ENCODE measurements at regions of chr1 and their contacts with region 1.

Region 1: GRCh38 chr1:147627435-147628110 is 42.8 kb downstream of the ACP6 start:
- DNase-seq: peak; percentile 26
- H3K4me3 ChIP-seq: no peak overlapping the region
- H3K27ac ChIP-seq: no peak overlapping the region
- H3K27me3 ChIP-seq: no peaks in the 10 kb centered on the region
- CTCF ChIP-seq: peak; percentile 96

Region 2: GRCh38 chr1:147605591-147605990 is 22.0 kb before region 1 on chr1:
- CTCF ChIA-PET with region 1: interaction called, 16 read pairs
- POLR2A ChIA-PET with region 1: no interaction called
- DNase-seq: no peak
- H3K4me3 ChIP-seq: no peak overlapping the region
- H3K27ac ChIP-seq: no peak overlapping the region
- H3K27me3 ChIP-seq: no peaks in the 10 kb centered on the region
- CTCF ChIP-seq: no peak

Region 3: DNA sequence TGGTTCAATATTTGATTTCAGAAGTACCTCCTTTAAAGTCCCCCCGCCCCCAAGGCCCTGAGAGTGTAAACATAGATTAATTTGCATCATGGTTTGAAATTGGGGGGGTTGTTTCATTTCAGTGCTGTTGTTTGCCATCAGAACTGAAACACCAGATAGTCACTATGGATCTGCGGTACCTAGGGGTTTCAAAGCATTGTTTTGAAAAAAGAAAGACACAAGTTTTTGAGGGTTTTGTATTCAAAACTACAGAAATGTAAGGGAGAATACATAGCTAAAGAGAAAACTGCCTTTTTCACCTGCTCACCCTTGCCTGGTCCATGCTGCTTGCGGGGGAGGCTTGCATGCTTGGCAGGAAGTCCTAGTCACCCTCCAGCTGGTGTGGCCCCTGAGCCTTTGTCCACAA is 16.5 kb before region 1 on chr1:
- CTCF ChIA-PET with region 1: interaction called, 16 read pairs
- POLR2A ChIA-PET with region 1: no interaction called
- DNase-seq: no peak
- H3K4me3 ChIP-seq: no peak overlapping the region
- H3K27ac ChIP-seq: no peak overlapping the region
- H3K27me3 ChIP-seq: no peaks in the 10 kb centered on the region
- CTCF ChIP-seq: no peak

Measured in AG04450 (cell line).